ENCODE measurements at regions of chr17 and their contacts with region 1.

Region 1: DNA sequence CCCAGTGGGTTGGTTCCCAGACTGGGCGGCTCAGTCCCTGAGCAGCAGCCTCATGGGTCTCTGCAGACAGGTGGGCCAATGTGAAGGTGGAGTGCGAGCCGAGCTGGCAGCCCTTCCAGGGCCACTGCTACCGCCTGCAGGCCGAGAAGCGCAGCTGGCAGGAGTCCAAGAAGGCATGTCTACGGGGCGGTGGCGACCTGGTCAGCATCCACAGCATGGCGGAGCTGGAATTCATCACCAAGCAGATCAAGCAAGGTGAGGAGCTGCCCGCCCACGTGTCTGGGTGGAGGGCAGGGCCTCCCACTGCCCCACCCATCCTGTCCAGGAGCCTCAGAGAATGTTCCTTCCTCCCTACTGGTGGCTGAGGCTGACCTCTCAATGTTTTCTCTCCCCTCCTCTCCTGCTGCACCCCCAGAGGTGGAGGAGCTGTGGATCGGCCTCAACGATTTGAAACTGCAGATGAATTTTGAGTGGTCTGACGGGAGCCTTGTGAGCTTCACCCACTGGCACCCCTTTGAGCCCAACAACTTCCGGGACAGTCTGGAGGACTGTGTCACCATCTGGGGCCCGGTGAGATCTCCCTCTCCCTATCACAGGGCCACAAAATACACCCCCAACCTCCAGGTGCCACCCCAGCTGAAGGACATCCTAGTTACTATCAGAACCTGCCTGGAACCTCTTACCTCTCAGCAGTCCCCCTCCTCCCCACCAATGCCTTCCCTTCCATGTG is 44.3 kb downstream of the MRC2 start:
- DNase-seq: no peak
- ATAC-seq: peak in 1 of 4 experiments; percentile 15
- H3K4me3 ChIP-seq: no peak overlapping the region
- H3K4me3 Mint-ChIP-seq: no peak overlapping the region
- H3K27ac ChIP-seq: no peak overlapping the region
- H3K27ac Mint-ChIP-seq: no peak overlapping the region
- H3K4me1 ChIP-seq: peaks cover 0 to 3% of the 10 kb centered on the region in 2 experiments
- H3K4me1 Mint-ChIP-seq: peaks cover 5 to 13% (median 5%) of the 10 kb centered on the region in 3 donors
- H3K27me3 ChIP-seq: peaks cover 0 to 4% of the 10 kb centered on the region in 2 experiments
- H3K27me3 Mint-ChIP-seq: no peaks in the 10 kb centered on the region

Region 2: DNA sequence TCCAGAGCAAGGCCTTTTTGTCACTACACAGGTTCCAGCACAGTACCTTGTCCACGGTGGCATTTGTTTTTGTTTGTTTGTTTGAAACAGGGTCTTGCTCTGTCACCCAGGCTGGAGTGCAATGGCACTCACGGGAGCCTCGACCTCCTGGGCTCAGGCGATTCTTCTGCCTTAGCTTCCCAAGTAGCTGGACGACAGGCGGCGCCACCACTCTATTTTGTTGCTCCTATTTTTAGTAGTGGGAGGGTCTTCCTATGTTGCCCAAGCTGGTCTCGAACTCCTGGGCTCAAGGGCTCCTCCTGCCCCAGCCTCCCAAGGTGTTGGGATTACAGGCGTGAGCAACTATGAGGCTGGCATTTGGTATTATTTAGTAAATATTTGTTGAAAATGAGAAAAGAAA is 33.9 kb before region 1 on chr17:
- CTCF ChIA-PET with region 1: no interaction called
- POLR2A ChIA-PET with region 1: no interaction called
- DNase-seq: no peak
- ATAC-seq: no peak
- H3K4me3 ChIP-seq: no peak overlapping the region
- H3K4me3 Mint-ChIP-seq: no peak overlapping the region
- H3K27ac ChIP-seq: no peak overlapping the region
- H3K27ac Mint-ChIP-seq: no peak overlapping the region
- H3K4me1 ChIP-seq: no peaks in the 10 kb centered on the region
- H3K4me1 Mint-ChIP-seq: peaks cover 0 to 3% (median under 1%) of the 10 kb centered on the region in 3 donors
- H3K27me3 ChIP-seq: peaks cover 0 to 3% of the 10 kb centered on the region in 2 experiments
- H3K27me3 Mint-ChIP-seq: no peaks in the 10 kb centered on the region

Region 3: GRCh38 chr17:63406689-63407330 is 735.1 kb after region 1 on chr17:
- CTCF ChIA-PET with region 1: interaction called, 5 to 11 read pairs
- POLR2A ChIA-PET with region 1: no interaction called
- DNase-seq: peak in 32 of 35 experiments; percentile 38 to 88 (median 57)
- ATAC-seq: peak; percentile 72 to 91 (median 77)
- H3K4me3 ChIP-seq: no peak overlapping the region
- H3K4me3 Mint-ChIP-seq: no peak overlapping the region
- H3K27ac ChIP-seq: peak overlapping the region; percentile 15
- H3K27ac Mint-ChIP-seq: peak overlapping the region in 1 of 2 donors; percentile 4
- H3K4me1 ChIP-seq: no peaks in the 10 kb centered on the region
- H3K4me1 Mint-ChIP-seq: peaks cover 0 to 5% (median 4%) of the 10 kb centered on the region in 3 donors
- H3K27me3 ChIP-seq: no peaks in the 10 kb centered on the region
- H3K27me3 Mint-ChIP-seq: no peaks in the 10 kb centered on the region

Measured in T-cell (primary cell).